Ascending aorta (tissue), 2 donors: ENCODE measurements at regions of chr2 and their contacts with region 1.

Region 1: GRCh38 chr2:140454717-140455116 is 1674.5 kb upstream of the NXPH2 start:
- DNase-seq: no peak
- H3K4me3 ChIP-seq: no peak overlapping the region
- H3K27ac ChIP-seq: peak overlapping the region in 1 of 2 donors; percentile 49
- H3K4me1 ChIP-seq: no peaks in the 10 kb centered on the region
- H3K27me3 ChIP-seq: no peaks in the 10 kb centered on the region
- CTCF ChIP-seq: no peak

Region 2: DNA sequence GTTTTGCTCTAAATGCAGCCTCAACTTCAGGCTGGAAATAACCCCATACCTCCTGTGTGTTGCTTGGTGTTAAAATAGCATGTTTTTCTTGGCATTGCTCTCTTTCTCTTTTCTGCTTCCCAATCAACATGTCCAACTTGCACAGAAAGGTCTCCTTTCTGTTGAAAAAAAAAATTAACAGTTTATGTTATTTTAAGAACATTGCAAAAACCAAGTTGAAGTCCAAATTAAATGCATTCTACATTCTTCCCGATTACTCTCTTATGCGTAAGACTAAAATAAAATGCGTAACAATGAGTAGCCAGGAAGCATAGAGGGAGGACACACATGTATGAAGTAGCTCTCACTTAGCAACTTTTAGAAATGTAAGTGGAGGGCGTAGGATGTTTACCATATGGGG is 268.4 kb before region 1 on chr2:
- intact Hi-C with region 1: loop called (anchors 10 kb)
- DNase-seq: no peak
- H3K4me3 ChIP-seq: no peak overlapping the region
- H3K27ac ChIP-seq: no peak overlapping the region
- H3K4me1 ChIP-seq: peaks cover 0 to 2% of the 10 kb centered on the region in 2 donors
- H3K27me3 ChIP-seq: no peaks in the 10 kb centered on the region
- CTCF ChIP-seq: no peak

Region 3: DNA sequence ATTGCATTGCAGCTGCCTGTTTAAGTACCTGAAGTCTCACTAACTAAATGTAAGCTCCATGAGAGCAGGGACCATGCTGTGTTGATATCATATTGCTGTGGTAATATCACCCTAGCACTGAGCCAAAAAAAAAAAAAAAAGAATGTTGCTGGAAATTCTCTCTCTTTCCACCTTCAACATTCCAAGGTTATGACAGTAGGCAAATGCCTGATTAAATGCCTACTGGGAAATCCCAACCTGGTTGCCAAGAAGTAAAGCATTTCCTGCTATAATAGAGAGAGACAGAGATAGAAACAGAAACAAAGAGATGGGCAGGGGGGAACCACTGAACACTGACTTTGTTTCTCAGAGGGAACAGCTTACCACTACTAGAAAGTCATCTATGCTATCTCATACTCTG is 71.9 kb after region 1 on chr2:
- intact Hi-C with region 1: no loop called
- DNase-seq: no peak
- H3K4me3 ChIP-seq: no peak overlapping the region
- H3K27ac ChIP-seq: no peak overlapping the region
- H3K4me1 ChIP-seq: no peaks in the 10 kb centered on the region
- H3K27me3 ChIP-seq: no peaks in the 10 kb centered on the region
- CTCF ChIP-seq: no peak

Region 4: GRCh38 chr2:140695163-140695562 is 240.4 kb after region 1 on chr2:
- intact Hi-C with region 1: no loop called
- DNase-seq: no peak
- H3K4me3 ChIP-seq: no peak overlapping the region
- H3K27ac ChIP-seq: no peak overlapping the region
- H3K4me1 ChIP-seq: no peaks in the 10 kb centered on the region
- H3K27me3 ChIP-seq: no peaks in the 10 kb centered on the region
- CTCF ChIP-seq: no peak